ENCODE measurements at regions of chr3 and their contacts with region 1.

Region 1: DNA sequence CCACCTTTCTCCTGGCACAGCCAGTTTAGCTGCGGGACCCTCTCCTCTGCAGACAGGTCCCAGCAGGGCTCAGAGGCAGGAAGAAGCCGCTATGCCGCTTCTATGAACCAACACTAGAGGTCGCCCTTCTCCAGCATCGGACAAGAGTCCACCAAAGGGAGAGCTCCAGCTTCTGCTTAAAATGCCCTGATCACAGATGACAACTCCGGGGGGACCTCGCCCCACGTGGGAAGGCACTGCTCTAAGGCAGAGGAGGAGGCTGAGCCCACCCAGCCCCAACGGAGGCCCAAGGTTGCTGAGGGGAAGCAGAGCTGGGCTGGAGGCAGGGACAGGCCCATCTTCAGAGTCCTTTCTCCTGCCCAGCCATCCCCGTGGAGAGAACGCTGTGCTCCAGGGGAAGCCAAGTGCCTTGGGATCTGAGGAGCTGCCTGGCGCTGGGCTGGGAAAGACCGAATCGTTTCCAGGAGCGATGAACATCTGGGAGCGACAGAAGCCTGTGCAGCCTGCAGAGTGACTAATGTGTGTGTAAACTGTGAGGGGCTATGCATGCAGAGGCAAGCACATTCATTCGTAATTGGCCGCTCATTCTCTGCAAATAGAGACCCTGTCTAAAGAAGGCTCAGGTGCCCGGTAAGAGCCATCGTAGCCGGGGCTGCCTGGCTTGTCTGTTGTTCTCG is 43.5 kb upstream of the BDH1 start:
- DNase-seq: peak; percentile 66 to 70
- ATAC-seq: peak; percentile 97 to 98
- H3K4me3 ChIP-seq: no peak overlapping the region
- H3K27ac ChIP-seq: peak overlapping the region in 1 of 2 experiments; percentile 58; a peak in 1 of 6 replicates
- H3K4me1 ChIP-seq: no peaks in the 10 kb centered on the region
- CTCF ChIP-seq: peak; percentile 71
- EP300 ChIP-seq: no peak
- POLR2A ChIP-seq: no peak
- RAD21 ChIP-seq: peak; percentile 65 to 72

Region 2: DNA sequence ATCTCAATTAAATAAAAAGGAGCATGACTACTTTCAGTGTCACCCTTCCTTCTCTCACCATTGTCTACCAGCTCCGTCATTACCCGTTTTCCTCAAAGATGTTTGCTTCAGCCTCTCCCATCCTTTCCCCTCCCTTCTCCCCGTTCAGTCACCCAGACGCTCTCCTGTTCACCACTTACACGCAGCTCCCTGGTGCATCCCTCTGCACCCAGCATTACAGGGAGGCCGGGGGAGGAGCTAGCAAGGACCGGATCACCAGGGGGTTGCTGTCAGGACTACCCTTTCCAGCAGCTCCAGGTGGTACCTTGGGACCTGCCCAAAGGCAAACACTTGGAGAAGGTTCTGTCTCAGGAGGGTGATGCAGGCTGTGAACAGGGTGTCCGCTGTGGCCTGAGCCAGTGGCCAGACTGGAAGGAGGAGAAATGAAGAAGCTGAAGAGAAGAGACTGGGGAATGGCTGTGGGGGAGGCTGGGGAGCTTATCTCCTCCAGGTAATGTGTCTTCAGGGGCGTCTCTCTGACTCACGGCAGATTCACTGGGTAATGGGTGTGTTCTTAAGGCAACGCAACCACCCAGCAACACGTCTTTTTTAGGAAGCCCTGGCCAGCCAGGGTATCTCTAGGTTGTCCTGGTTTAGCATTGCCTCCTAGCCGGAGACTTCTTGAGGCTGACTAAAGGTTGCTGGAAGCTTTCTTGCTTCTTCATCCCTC is 21.7 kb before region 1 on chr3:
- CTCF ChIA-PET with region 1: interaction called, 12 read pairs
- POLR2A ChIA-PET with region 1: no interaction called
- DNase-seq: no peak
- ATAC-seq: no peak
- H3K4me3 ChIP-seq: no peak overlapping the region
- H3K27ac ChIP-seq: no peak overlapping the region
- H3K4me1 ChIP-seq: no peaks in the 10 kb centered on the region
- CTCF ChIP-seq: no peak
- EP300 ChIP-seq: no peak
- POLR2A ChIP-seq: no peak
- RAD21 ChIP-seq: no peak

Region 3: DNA sequence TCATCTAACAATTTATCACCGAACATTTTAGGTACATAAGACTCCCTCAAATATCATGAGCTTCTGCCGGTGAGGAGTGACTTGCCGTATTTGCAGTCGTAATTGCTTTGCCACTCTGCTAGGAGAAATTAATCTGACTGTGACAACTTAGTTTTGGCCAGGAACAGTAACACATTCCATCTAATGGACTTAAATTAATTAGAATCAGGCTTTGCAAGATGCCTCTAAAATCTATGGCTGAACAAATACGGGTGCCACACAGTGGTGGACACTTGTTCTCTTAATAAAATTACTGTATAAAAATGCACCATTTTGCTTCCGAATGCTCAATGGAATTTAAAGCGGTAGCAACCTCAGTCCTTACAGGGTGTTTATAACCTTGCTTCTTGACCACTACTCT is 15.9 kb before region 1 on chr3:
- CTCF ChIA-PET with region 1: interaction called, 20 read pairs
- POLR2A ChIA-PET with region 1: no interaction called
- DNase-seq: no peak
- ATAC-seq: no peak
- H3K4me3 ChIP-seq: no peak overlapping the region
- H3K27ac ChIP-seq: no peak overlapping the region
- H3K4me1 ChIP-seq: no peaks in the 10 kb centered on the region
- CTCF ChIP-seq: no peak
- EP300 ChIP-seq: no peak
- POLR2A ChIP-seq: no peak
- RAD21 ChIP-seq: no peak

Region 4: GRCh38 chr3:197615430-197615829 is 16.2 kb after region 1 on chr3:
- CTCF ChIA-PET with region 1: interaction called, 22 read pairs
- POLR2A ChIA-PET with region 1: no interaction called
- DNase-seq: no peak
- ATAC-seq: no peak
- H3K4me3 ChIP-seq: no peak overlapping the region
- H3K27ac ChIP-seq: no peak overlapping the region
- H3K4me1 ChIP-seq: no peaks in the 10 kb centered on the region
- CTCF ChIP-seq: no peak
- EP300 ChIP-seq: no peak
- POLR2A ChIP-seq: no peak
- RAD21 ChIP-seq: no peak